A549 (cell line): ENCODE measurements at regions of chr2 and their contacts with region 1.

Region 1: GRCh38 chr2:9638532-9638931 is 7.7 kb upstream of the YWHAQ start:
- DNase-seq: peak; percentile 79 to 89
- ATAC-seq: peak; percentile 89 to 92
- H3K4me3 ChIP-seq: no peak overlapping the region
- H3K27ac ChIP-seq: peak overlapping the region; percentile 70 to 79
- H3K4me1 ChIP-seq: peaks cover 45% of the 10 kb centered on the region
- CTCF ChIP-seq: no peak
- EP300 ChIP-seq: no peak
- POLR2A ChIP-seq: no peak
- RAD21 ChIP-seq: peak in 1 of 2 experiments; percentile 25; a peak in 1 of 5 replicates

Region 2: DNA sequence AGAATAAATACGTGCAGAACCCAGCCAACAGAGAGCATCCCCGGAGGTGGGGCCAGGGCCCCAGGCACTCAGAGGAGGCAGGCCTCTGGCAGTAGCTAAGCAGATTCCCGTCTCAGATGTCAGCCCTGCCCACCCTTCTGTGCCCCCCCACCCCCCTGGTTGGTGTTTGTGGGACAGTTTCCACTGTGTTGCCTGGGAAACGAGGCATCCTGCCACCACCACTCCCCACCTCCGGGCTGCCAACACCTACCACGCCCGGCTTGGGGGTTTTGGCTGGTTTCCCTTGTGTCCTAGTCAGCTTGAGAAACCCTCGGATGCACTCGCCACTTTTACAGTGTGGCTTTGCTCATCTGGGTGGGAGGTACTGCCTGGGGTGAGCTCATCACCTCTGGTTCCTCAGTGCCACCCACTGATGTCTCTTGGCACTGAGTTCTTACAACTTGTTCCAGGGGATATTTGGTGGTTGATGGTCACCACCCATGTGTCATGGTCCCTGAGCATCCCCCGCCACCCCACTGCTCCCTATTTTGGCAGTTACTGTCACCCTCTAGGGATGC is 64.6 kb after region 1 on chr2:
- CTCF ChIA-PET with region 1: interaction called, 10 read pairs
- POLR2A ChIA-PET with region 1: interaction called, 7 read pairs
- DNase-seq: peak; percentile 90 to 97
- ATAC-seq: peak; percentile 87 to 88
- H3K4me3 ChIP-seq: peak overlapping the region; percentile 17; the same call in 1 of the 3 replicates
- H3K27ac ChIP-seq: peak overlapping the region; percentile 91 to 95
- H3K4me1 ChIP-seq: peaks cover 48% of the 10 kb centered on the region
- CTCF ChIP-seq: peak; percentile 17; the same call in 1 of the 3 replicates
- EP300 ChIP-seq: peak in 1 of 2 experiments; percentile 4; a peak in 1 of 5 replicates
- POLR2A ChIP-seq: no peak
- RAD21 ChIP-seq: peak; percentile 47 to 51; a peak in 4 of 5 replicates

Region 3: DNA sequence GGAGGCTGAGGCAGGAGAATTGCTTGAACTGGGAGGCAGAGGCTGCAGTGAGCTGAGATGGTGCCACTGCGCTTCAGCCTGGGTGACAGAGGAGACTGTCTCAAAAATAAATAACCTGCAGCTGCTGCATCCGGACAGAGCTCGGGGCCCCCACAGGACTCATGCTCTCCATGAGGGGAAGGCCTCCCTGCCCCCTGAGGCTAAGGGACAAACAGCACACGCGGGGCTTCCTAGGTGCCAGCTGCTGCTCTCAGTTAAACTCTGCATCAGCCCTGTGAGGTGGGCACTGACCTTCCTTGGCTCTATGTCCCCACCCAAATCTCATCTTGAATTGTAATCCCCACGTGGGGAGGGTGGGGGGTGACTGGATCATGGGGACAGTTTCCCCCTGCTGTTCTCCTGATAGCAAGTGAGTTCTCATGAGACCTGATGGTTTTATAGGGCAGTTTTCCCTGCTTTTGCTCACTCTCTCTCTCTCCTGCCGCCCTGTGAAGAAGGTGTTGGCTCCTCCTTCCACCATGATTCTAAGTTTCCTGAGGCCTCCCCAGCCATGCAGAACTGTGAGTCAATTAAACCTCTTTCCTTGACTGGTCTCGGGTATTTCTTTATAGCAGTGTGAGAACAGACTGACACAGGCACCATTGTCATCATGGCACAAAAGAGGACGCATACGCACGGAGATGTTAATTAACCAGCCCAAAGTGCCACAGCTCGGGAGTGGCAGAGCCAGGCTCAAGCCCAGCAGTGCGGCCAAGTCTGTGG is 154.8 kb after region 1 on chr2:
- CTCF ChIA-PET with region 1: no interaction called
- POLR2A ChIA-PET with region 1: no interaction called
- DNase-seq: no peak
- ATAC-seq: no peak
- H3K4me3 ChIP-seq: no peak overlapping the region
- H3K27ac ChIP-seq: no peak overlapping the region
- H3K4me1 ChIP-seq: 0 out of 3 replicates have a peak, but pooled peaks cover 2% of the 10 kb centered on the region
- CTCF ChIP-seq: no peak
- EP300 ChIP-seq: no peak
- POLR2A ChIP-seq: no peak
- RAD21 ChIP-seq: no peak